ENCODE measurements at regions of chr9 and their contacts with region 1.

Region 1: DNA sequence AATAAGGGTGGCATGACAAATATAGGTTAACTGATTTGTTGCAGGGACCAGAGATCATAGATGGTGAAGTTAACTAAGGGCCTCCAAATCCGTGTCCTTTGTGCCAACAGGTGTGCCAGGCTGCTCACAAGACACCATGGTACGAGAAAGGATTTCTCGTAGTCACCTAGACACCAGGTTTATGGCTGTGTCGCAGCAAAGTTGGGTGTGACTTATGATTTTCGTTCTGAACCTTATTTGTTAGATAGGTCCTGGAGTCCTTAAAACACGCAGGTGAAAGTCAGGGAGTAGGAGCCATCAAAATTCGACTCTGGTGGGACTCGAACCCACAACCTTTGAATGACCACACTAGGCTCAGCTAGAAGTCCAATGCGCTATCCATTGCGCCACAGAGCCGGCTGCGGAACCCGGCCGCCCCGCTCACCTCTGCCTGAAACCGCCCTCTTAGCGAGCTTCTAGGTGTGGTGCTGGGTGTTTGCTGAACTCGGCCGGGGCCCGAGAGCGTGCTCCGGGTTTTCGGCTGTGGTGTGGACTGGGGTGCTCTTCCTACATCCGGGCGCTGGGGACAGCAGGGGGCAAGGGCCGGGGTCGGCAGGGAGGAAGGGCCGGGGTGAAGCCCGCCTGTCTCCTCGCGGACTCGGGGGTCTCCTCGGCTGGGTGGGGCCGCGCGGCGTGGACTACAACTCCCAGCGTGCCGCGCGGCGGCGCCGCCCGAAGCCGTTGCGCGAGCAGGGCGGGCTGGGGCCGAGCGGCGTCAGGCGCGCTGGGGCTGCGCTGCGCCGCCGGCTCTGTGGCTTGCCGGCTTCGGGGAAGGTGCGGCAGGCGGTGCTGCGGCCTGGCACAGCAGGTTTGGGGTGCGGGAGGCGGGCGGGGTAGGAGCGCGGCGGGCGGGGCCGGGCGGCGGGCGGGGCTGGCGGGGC is at the start of gene SLC27A4:
- DNase-seq: peak; percentile 88
- ATAC-seq: peak; percentile 93
- H3K4me3 ChIP-seq: peak within 1 kb of the TSS; percentile 69 to 80 (median 70)
- H3K4me3 Mint-ChIP-seq: peak within 1 kb of the TSS; percentile 98
- H3K27ac ChIP-seq: peak within 1 kb of the TSS; percentile 7 to 48
- H3K27ac Mint-ChIP-seq: peak within 1 kb of the TSS; percentile 91
- H3K4me1 ChIP-seq: peaks cover 11 to 15% of the 10 kb centered on the region in 2 donors
- H3K4me1 Mint-ChIP-seq: peaks cover 9% of the 10 kb centered on the region
- H3K27me3 ChIP-seq: no peaks in the 10 kb centered on the region
- H3K27me3 Mint-ChIP-seq: no peaks in the 10 kb centered on the region
- CTCF ChIP-seq: no peak
- total RNA-seq, gene SLC27A4: 12.0 and 12.9 TPM in 2 replicates

Region 2: GRCh38 chr9:127991042-127991756 is 348.8 kb before region 1 on chr9:
- CTCF ChIA-PET with region 1: no interaction called
- POLR2A ChIA-PET with region 1: no interaction called
- intact Hi-C with region 1: no loop called
- DNase-seq: peak; percentile 75
- ATAC-seq: peak; percentile 42
- H3K4me3 ChIP-seq: no peak overlapping the region
- H3K4me3 Mint-ChIP-seq: peak overlapping the region; percentile 5
- H3K27ac ChIP-seq: peak overlapping the region; percentile 72 to 80
- H3K27ac Mint-ChIP-seq: peak overlapping the region; percentile 67
- H3K4me1 ChIP-seq: peaks cover 31 to 39% of the 10 kb centered on the region in 2 donors
- H3K4me1 Mint-ChIP-seq: peaks cover 42% of the 10 kb centered on the region
- H3K27me3 ChIP-seq: no peaks in the 10 kb centered on the region
- H3K27me3 Mint-ChIP-seq: no peaks in the 10 kb centered on the region
- CTCF ChIP-seq: no peak

Region 3: DNA sequence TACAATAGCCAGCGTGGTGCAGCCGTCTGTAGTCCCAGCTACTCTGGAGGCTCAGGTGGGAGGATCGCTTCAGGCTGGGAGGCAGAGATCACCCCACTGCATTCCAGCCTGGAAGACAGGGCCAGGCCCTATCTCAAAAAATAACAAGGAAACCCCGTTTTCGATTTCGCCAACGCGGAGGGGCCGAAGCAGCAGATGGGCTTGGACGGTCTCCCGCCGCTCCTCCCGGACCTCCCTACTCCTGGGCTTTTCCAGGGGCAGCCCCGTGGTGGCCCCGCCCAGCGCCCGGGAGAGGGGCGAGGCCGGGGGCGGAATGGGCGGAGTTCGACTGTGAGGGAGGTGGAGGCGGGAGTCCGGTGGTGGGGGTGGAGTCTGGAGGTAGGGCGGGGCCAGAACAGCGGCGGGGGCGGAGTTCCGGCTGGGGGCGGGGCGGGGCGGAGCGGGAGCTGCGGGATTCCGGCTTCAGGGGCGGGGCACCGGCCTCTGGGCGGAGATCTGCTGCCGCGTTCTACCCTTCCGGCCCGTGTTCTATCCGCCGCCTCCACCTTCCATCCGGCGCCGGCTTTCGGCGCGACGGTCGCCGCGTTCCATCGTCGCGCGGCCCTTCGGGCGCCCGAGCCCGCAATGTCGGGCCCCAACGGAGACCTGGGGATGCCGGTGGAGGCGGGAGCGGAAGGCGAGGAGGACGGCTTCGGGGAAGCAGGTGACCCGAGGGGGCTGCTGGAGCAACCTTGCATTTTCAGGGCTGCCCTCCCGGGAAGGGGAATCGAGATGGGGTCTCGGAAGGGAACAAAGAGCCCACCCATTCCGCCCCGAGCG is 180.0 kb before region 1 on chr9 and contains the start of gene BBLN:
- CTCF ChIA-PET with region 1: interaction called, 4 read pairs
- POLR2A ChIA-PET with region 1: no interaction called
- intact Hi-C with region 1: loop called (anchors 1 kb)
- DNase-seq: peak; percentile 92
- ATAC-seq: peak; percentile 94
- H3K4me3 ChIP-seq: peak within 1 kb of the TSS; percentile 70 to 99 (median 86)
- H3K4me3 Mint-ChIP-seq: peak within 1 kb of the TSS; percentile 83
- H3K27ac ChIP-seq: peak within 1 kb of the TSS; percentile 72
- H3K27ac Mint-ChIP-seq: peak within 1 kb of the TSS; percentile 87
- H3K4me1 ChIP-seq: peaks cover 6 to 17% of the 10 kb centered on the region in 2 donors
- H3K4me1 Mint-ChIP-seq: peaks cover 12% of the 10 kb centered on the region
- H3K27me3 ChIP-seq: no peaks in the 10 kb centered on the region
- H3K27me3 Mint-ChIP-seq: no peaks in the 10 kb centered on the region
- CTCF ChIP-seq: no peak
- total RNA-seq, gene BBLN: 38.2 and 44.3 TPM in 2 replicates

Region 4: DNA sequence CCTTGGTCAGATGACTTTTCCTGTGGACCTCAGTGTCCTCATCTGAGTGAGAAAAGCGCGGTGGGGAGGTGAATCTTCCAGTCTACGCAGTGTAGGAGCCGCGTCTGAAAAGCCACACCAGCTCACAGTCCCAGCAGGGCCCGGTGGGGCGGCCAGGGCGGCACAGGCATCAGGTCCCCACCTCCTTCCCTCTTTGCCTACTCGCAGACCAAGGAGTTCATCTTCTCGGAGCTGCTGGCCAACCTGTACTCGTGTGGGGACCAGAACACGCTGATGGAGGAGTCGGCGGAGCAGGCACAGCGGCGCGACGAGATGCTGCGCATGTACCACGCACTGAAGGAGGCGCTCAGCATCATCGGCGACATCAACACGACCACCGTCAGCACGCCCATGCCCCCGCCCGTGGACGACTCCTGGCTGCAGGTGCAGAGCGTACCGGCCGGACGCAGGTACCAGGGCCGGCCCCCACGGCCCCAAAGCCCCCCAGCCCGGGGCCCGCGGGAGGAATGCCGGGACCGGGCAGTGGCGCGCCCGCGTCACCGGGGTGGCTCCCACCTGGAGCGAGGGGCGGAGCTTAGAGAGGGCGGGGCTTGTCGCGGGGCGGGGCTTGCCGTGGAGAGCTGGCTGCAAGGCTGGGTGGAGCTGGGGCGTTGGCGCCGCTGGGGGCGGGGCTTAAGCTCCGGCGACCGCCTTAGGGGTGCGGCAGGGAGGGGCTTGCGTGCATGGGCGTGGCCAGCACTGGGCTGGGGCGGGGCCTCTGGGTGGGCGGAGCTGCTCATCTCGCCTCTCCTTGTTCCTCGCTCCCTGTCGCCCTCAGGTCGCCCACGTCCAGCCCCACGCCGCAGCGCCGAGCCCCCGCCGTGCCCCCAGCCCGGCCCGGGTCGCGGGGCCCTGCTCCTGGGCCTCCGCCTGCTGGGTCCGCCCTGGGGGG is 89.9 kb before region 1 on chr9:
- CTCF ChIA-PET with region 1: no interaction called
- POLR2A ChIA-PET with region 1: no interaction called
- intact Hi-C with region 1: loop called (anchors 5 kb)
- DNase-seq: peak; percentile 97
- ATAC-seq: peak; percentile 98
- H3K4me3 ChIP-seq: peak overlapping the region in 4 of 5 experiments; percentile 47 to 74 (median 60)
- H3K4me3 Mint-ChIP-seq: peak overlapping the region; percentile 93
- H3K27ac ChIP-seq: peak overlapping the region; percentile 53 to 63
- H3K27ac Mint-ChIP-seq: peak overlapping the region; percentile 92
- H3K4me1 ChIP-seq: peaks cover 10 to 26% of the 10 kb centered on the region in 2 donors
- H3K4me1 Mint-ChIP-seq: peaks cover 33% of the 10 kb centered on the region
- H3K27me3 ChIP-seq: peaks cover 0 to 4% (median 0%) of the 10 kb centered on the region in 4 experiments
- H3K27me3 Mint-ChIP-seq: peaks cover 17% of the 10 kb centered on the region
- CTCF ChIP-seq: no peak

Region 5: DNA sequence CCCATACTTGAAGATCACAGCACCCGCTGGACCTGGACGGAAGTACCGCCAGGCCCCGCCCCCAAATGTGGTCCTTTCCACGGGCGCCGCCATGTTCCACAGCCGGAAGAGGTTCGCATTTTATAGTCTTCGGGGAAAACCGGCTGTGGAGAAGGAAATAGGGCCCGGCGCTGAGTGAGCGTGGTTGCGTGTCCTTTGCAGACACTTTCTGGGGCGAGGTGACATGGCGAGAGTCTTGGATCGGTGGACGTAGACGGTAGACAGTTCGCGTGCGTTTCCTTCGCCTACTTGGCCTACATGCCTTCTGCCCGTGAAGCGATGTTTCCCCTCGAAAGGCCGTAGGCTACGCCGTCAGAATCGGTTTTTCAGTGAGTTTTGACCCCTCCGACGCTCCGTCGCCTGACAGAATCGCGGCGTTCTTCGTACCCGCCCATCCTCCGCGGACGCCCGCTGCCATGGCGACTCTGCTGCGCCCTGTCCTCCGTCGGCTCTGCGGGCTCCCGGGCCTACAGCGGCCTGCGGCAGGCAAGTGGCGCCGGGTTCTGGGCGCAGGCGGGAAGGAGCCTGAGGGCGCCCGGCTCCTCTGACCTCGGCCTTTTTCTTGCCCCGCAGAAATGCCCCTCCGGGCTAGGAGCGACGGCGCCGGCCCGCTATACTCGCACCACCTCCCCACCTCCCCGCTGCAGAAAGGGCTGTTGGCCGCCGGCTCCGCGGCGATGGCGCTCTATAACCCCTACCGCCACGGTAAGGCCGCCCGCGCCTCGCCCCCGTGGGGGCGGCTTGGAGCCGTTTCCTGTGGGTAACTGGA is 17.4 kb before region 1 on chr9 and contains the starts of genes COQ4 and TRUB2:
- CTCF ChIA-PET with region 1: interaction called, 8 read pairs
- POLR2A ChIA-PET with region 1: interaction called, 4 read pairs
- intact Hi-C with region 1: loop called (anchors 1 kb)
- DNase-seq: peak; percentile 97
- ATAC-seq: peak; percentile 85
- H3K4me3 ChIP-seq: peak within 1 kb of the TSS; percentile 61 to 95 (median 92)
- H3K4me3 Mint-ChIP-seq: peak within 1 kb of the TSS; percentile 97
- H3K27ac ChIP-seq: peak within 1 kb of the TSS; percentile 75 to 78
- H3K27ac Mint-ChIP-seq: peak within 1 kb of the TSS; percentile 98
- H3K4me1 ChIP-seq: peaks cover 17 to 22% of the 10 kb centered on the region in 2 donors
- H3K4me1 Mint-ChIP-seq: peaks cover 31% of the 10 kb centered on the region
- H3K27me3 ChIP-seq: no peaks in the 10 kb centered on the region
- H3K27me3 Mint-ChIP-seq: no peaks in the 10 kb centered on the region
- CTCF ChIP-seq: no peak
- total RNA-seq, gene COQ4: 54.9 and 57.3 TPM in 2 replicates
- total RNA-seq, gene TRUB2: 21.4 and 21.5 TPM in 2 replicates

Region 6: DNA sequence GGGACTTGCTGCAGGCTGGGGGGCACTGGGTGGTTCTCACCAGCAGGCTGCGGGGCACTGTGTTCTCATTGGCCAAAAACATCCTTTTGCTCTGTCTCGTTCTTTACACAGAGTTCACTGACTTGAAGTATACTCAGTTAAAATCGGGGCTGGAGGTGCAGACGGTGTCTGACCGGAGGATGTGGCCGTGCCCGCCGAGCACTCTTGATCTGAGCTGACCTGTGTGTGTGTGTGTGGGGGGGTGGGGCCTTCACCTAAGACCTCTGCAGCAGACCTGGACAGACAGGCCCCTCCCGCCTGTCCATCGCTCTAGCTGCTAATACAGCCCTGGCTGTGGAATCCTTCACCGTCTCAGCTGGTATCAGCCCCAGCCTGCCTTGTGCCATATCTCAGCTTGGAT is 1470.1 kb after region 1 on chr9:
- CTCF ChIA-PET with region 1: no interaction called
- POLR2A ChIA-PET with region 1: interaction called, 10 read pairs
- intact Hi-C with region 1: no loop called
- DNase-seq: no peak
- ATAC-seq: no peak
- H3K4me3 ChIP-seq: no peak overlapping the region
- H3K4me3 Mint-ChIP-seq: no peak overlapping the region
- H3K27ac ChIP-seq: no peak overlapping the region
- H3K27ac Mint-ChIP-seq: no peak overlapping the region
- H3K4me1 ChIP-seq: no peaks in the 10 kb centered on the region
- H3K4me1 Mint-ChIP-seq: peaks cover 14% of the 10 kb centered on the region
- H3K27me3 ChIP-seq: no peaks in the 10 kb centered on the region
- H3K27me3 Mint-ChIP-seq: no peaks in the 10 kb centered on the region
- CTCF ChIP-seq: no peak